Activated CD4-positive, alpha-beta T cell treated with anti-CD3 and anti-CD28 coated beads, Interleukin-2, amount 10 ng/mL, durations not matched to agents 7 days and 5 days (primary cell): ENCODE measurements at regions of chr22 and their contacts with region 1.

Region 1: DNA sequence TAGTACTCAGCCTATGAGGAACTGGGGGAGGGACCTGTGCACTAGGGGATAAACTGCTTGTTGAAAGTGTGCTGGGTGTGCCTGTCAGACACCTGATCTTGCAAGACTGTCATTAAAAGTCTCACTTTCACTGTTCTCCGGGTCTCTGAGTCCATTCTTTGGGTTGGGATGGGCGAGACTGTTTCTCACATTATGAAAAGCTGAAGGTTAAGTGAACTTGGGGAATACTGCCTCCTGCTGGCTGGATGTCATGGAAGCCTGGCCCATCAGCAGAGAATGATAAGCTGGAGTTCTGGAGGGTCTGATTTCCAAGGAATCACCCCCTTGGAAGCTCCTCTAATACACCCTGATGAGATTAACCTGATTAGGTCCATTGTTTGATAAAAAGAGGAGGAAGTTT is 9.0 kb upstream of the VPREB1 start:
- DNase-seq: peak; percentile 63
- H3K4me3 Mint-ChIP-seq: no peak overlapping the region
- H3K27ac Mint-ChIP-seq: no peak overlapping the region
- H3K4me1 Mint-ChIP-seq: peaks cover 10% of the 10 kb centered on the region
- H3K27me3 Mint-ChIP-seq: peaks cover 3% of the 10 kb centered on the region

Region 2: GRCh38 chr22:22201185-22201929 is 34.2 kb before region 1 on chr22:
- CTCF ChIA-PET with region 1: interaction called, 26 read pairs
- POLR2A ChIA-PET with region 1: interaction called, 3 read pairs
- DNase-seq: peak; percentile 80
- H3K4me3 Mint-ChIP-seq: no peak overlapping the region
- H3K27ac Mint-ChIP-seq: peak overlapping the region; percentile 57
- H3K4me1 Mint-ChIP-seq: peaks cover 4% of the 10 kb centered on the region
- H3K27me3 Mint-ChIP-seq: peaks cover 6% of the 10 kb centered on the region

Region 3: GRCh38 chr22:22207845-22208564 is 27.6 kb before region 1 on chr22:
- CTCF ChIA-PET with region 1: interaction called, 26 read pairs
- POLR2A ChIA-PET with region 1: no interaction called
- DNase-seq: peak; percentile 88
- H3K4me3 Mint-ChIP-seq: peak overlapping the region; percentile 9
- H3K27ac Mint-ChIP-seq: peak overlapping the region; percentile 87
- H3K4me1 Mint-ChIP-seq: peaks cover 44% of the 10 kb centered on the region
- H3K27me3 Mint-ChIP-seq: peaks cover 3% of the 10 kb centered on the region

Region 4: GRCh38 chr22:22710719-22711531 is 475.4 kb after region 1 on chr22:
- CTCF ChIA-PET with region 1: no interaction called
- POLR2A ChIA-PET with region 1: no interaction called
- DNase-seq: peak; percentile 79
- H3K4me3 Mint-ChIP-seq: no peak overlapping the region
- H3K27ac Mint-ChIP-seq: no peak overlapping the region
- H3K4me1 Mint-ChIP-seq: peaks cover 1% of the 10 kb centered on the region
- H3K27me3 Mint-ChIP-seq: peaks cover 4% of the 10 kb centered on the region